Heart left ventricle (tissue), 16 donors: ENCODE measurements at regions of chr11 and their contacts with region 1.

Region 1: GRCh38 chr11:33065445-33066178 is 26.2 kb downstream of the TCP11L1 start:
- DNase-seq: peak; percentile 45 to 74 (median 58)
- ATAC-seq: peak; percentile 66 to 86 (median 84)
- H3K4me3 ChIP-seq: no peak overlapping the region
- H3K27ac ChIP-seq: no peak overlapping the region
- H3K4me1 ChIP-seq: peaks cover 0 to 28% (median 2%) of the 10 kb centered on the region in 12 donors
- H3K27me3 ChIP-seq: no peaks in the 10 kb centered on the region
- CTCF ChIP-seq: peak; percentile 74 to 89 (median 80)
- POLR2A ChIP-seq: no peak

Region 2: GRCh38 chr11:32809313-32809712 is 256.3 kb before region 1 on chr11:
- intact Hi-C with region 1: loop called in 6 of 10 experiments (anchors 2 to 10 kb)
- DNase-seq: peak in 4 of 5 donors; percentile 50 to 62 (median 54)
- ATAC-seq: peak in 3 of 4 donors; percentile 74 to 82 (median 78)
- H3K4me3 ChIP-seq: no peak overlapping the region
- H3K27ac ChIP-seq: no peak overlapping the region
- H3K4me1 ChIP-seq: no peaks in the 10 kb centered on the region
- H3K27me3 ChIP-seq: peaks cover 0 to 2% (median 0%) of the 10 kb centered on the region in 9 donors
- CTCF ChIP-seq: peak; percentile 50 to 75 (median 64)
- POLR2A ChIP-seq: no peak

Region 3: GRCh38 chr11:32817181-32817851 is 248.3 kb before region 1 on chr11:
- intact Hi-C with region 1: loop called in 1 of 10 experiments (anchors 10 kb)
- DNase-seq: no peak
- ATAC-seq: peak in 1 of 4 donors; percentile 12
- H3K4me3 ChIP-seq: no peak overlapping the region
- H3K27ac ChIP-seq: no peak overlapping the region
- H3K4me1 ChIP-seq: peaks cover 0 to 7% (median 0%) of the 10 kb centered on the region in 12 donors
- H3K27me3 ChIP-seq: no peaks in the 10 kb centered on the region
- CTCF ChIP-seq: no peak
- POLR2A ChIP-seq: no peak

Region 4: GRCh38 chr11:32884770-32885384 is 180.7 kb before region 1 on chr11:
- intact Hi-C with region 1: loop called in 1 of 10 experiments (anchors 10 kb)
- DNase-seq: no peak
- ATAC-seq: peak in 1 of 4 donors; percentile 28
- H3K4me3 ChIP-seq: no peak overlapping the region
- H3K27ac ChIP-seq: no peak overlapping the region
- H3K4me1 ChIP-seq: no peaks in the 10 kb centered on the region
- H3K27me3 ChIP-seq: no peaks in the 10 kb centered on the region
- CTCF ChIP-seq: peak in 7 of 12 donors; percentile 31 to 51 (median 36)
- POLR2A ChIP-seq: no peak

Region 5: GRCh38 chr11:32960553-32961164 is 105.0 kb before region 1 on chr11:
- intact Hi-C with region 1: loop called (anchors 1 to 5 kb)
- DNase-seq: no peak
- ATAC-seq: no peak
- H3K4me3 ChIP-seq: no peak overlapping the region
- H3K27ac ChIP-seq: no peak overlapping the region
- H3K4me1 ChIP-seq: peaks cover 0 to 4% (median 0%) of the 10 kb centered on the region in 12 donors
- H3K27me3 ChIP-seq: no peaks in the 10 kb centered on the region
- CTCF ChIP-seq: peak; percentile 51 to 77 (median 66)
- POLR2A ChIP-seq: no peak

Region 6: DNA sequence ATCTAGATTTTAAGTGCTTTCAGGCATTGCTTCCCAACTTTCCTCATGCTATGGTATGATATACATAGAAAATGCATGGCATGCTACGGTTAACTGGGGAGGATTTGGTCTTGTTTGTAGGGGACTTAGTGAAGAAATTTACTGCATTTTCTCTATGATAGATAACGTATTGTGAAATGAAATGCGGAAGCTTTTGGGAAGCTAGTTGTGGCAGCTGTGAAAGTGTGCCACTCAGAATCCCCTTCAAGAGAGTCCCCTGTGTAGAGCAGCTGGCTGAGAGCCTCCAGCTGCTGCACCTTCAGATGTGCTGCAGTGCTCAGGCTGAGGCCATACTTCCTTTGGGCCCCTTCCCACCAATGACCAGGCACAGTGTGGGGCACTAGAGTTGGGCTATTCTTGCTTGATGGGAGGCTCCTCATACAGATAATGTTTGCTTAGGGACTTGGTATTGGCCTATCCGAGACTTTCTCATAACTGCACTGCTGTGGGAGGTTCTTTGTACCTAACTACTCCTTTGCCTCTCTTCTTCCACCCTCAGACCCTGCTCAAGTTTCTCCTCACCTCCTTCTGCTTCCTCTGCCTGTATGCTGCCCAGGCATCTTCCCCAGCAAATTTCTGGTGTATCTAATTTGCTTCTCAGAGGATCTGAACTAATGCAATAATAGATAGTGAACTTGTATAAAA is 258.8 kb after region 1 on chr11:
- intact Hi-C with region 1: no loop called
- DNase-seq: no peak
- ATAC-seq: peak in 3 of 4 donors; percentile 21 to 48 (median 32)
- H3K4me3 ChIP-seq: no peak overlapping the region
- H3K27ac ChIP-seq: peak overlapping the region in 6 of 12 donors; percentile 4 to 31 (median 10)
- H3K4me1 ChIP-seq: peaks cover 14 to 97% (median 78%) of the 10 kb centered on the region in 12 donors
- H3K27me3 ChIP-seq: no peaks in the 10 kb centered on the region
- CTCF ChIP-seq: no peak
- POLR2A ChIP-seq: no peak